Panc1 (cell line): ENCODE measurements at regions of chr16 and their contacts with region 1.

Region 1: DNA sequence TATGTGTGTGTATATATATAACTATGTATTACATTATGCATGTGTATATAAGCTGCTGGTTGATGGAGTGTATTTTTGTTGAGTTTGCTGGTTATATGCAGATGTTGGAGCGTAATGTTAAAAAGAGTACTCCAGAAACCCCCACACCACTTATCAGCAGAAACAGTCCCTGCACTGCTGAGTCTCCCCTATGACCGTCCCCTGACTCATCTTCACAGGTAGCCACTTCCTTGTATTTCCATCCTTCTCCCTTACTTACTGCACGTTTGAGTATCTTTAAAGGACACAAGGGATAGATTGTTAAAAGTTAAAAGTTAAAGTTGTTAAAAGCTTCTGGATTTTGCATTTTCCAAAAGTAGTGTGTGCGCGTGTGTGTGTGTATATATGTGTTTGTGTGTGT is 853.9 kb upstream of the EEF2KMT start:
- DNase-seq: no peak
- ATAC-seq: no peak
- H3K4me3 ChIP-seq: no peak overlapping the region
- H3K27ac ChIP-seq: no peak overlapping the region
- H3K4me1 ChIP-seq: no peaks in the 10 kb centered on the region
- H3K27me3 ChIP-seq: no peaks in the 10 kb centered on the region
- CTCF ChIP-seq: no peak

Region 2: GRCh38 chr16:5918567-5919127 is 32.8 kb before region 1 on chr16:
- CTCF ChIA-PET with region 1: interaction called, 15 read pairs
- POLR2A ChIA-PET with region 1: no interaction called
- in situ Hi-C with region 1: no loop called
- intact Hi-C with region 1: no loop called
- DNase-seq: no peak
- ATAC-seq: no peak
- H3K4me3 ChIP-seq: no peak overlapping the region
- H3K27ac ChIP-seq: no peak overlapping the region
- H3K4me1 ChIP-seq: no peaks in the 10 kb centered on the region
- H3K27me3 ChIP-seq: peaks cover 9% of the 10 kb centered on the region; the same call in 1 of the 2 replicates
- CTCF ChIP-seq: peak; percentile 44; the same call in 1 of the 2 replicates

Region 3: DNA sequence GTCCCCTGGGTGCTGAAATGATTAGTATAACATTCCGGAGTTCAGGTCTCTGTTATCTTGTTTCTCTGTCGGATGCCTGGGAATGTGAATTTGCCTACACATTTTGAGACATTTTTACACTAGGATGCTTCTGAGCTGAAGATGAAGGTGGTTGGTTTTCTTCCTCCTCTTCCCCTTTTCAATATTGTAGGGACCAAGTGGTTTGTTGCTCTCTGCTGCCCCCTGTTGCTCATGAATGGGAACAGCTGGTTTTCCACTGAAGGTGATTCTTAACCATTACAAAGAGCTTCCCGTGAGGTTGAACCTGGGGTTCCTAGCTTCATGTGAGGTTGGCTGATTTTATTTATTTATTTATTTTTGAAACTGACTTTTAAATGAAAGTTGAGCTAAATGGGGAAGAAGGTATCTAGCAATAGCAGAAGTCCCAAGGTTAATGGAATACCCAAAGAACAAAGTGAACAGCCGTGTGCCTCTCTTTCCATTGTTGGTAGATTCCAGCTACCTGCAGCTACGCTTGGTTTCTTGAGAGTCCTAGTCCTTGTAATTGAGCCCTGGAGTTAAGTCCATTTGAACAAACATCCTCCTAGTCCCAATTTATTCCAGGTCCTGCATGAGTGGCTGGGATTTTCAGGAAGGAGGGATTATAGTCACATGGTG is 130.0 kb after region 1 on chr16:
- CTCF ChIA-PET with region 1: no interaction called
- POLR2A ChIA-PET with region 1: no interaction called
- in situ Hi-C with region 1: no loop called
- intact Hi-C with region 1: no loop called
- DNase-seq: peak; percentile 13
- ATAC-seq: no peak
- H3K4me3 ChIP-seq: no peak overlapping the region
- H3K27ac ChIP-seq: no peak overlapping the region
- H3K4me1 ChIP-seq: no peaks in the 10 kb centered on the region
- H3K27me3 ChIP-seq: no peaks in the 10 kb centered on the region
- CTCF ChIP-seq: peak; percentile 84